HepG2 (cell line): ENCODE measurements at regions of chr18 and their contacts with region 1.

Region 1: GRCh38 chr18:74652392-74652988 is 54.8 kb downstream of the ZNF407 start:
- DNase-seq: peak; percentile 33
- ATAC-seq: peak; percentile 38; the same call in 2 of the 3 replicates
- H3K4me3 ChIP-seq: no peak overlapping the region
- H3K27ac ChIP-seq: no peak overlapping the region
- H3K4me1 ChIP-seq: 0 out of 2 replicates have a peak, but pooled peaks cover 3% of the 10 kb centered on the region
- H3K27me3 ChIP-seq: no peaks in the 10 kb centered on the region
- CTCF ChIP-seq: peak; percentile 64
- EP300 ChIP-seq: no peak
- POLR2A ChIP-seq: no peak
- RAD21 ChIP-seq: peak; percentile 31; the same call in 1 of the 2 replicates

Region 2: DNA sequence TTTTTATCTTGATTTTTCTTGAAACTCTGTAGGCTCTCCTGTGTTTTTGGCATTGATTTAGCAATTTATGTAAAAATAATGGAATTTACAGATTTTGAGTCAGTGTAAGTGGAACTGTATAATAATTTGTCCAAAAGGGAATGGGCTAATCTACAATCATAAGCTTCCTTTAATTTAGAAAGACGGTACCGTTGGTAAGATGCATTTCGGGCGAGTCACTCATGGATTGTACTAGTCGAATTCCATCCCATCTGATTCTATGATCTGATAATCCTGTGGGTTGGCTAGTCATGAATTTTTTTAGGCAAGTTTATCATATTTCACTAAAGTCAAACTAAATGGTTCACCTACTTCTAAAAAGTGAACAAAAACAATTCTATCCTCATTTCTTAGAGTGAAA is 78.6 kb after region 1 on chr18:
- CTCF ChIA-PET with region 1: no interaction called
- POLR2A ChIA-PET with region 1: no interaction called
- in situ Hi-C with region 1: no loop called
- intact Hi-C with region 1: loop called (anchors 5 kb)
- DNase-seq: no peak
- ATAC-seq: no peak
- H3K4me3 ChIP-seq: no peak overlapping the region
- H3K27ac ChIP-seq: no peak overlapping the region
- H3K4me1 ChIP-seq: peaks cover 47% of the 10 kb centered on the region
- H3K27me3 ChIP-seq: no peaks in the 10 kb centered on the region
- CTCF ChIP-seq: no peak
- EP300 ChIP-seq: no peak
- POLR2A ChIP-seq: no peak
- RAD21 ChIP-seq: no peak

Region 3: DNA sequence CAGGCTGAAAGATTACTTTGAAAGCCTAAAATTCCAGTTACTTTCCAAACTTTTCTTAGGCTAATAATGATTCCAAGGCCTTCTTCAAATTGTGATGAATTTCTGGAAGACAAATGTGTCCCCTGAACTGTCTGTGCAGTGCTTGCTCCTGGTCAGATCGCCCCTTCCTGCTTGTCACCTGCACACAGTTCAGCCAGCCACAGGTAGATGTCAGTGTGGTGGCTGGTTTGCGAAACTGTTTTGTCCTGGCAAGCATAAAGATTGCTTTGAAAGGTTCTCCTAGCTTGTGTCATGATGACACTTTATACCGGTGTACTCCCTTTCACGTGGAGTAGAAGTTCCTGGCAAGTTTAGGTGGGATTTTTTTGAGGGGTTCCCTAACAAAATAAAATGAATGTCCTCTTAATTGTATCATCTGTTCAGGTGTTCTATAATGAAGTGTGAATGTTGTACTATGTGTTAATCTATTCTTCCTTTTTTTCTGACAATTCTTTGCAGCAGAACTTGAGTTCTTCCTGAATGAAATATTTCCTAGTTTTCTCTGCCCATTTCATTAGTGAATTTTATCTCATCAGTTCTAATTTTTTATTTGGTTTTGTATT is 244.0 kb after region 1 on chr18:
- CTCF ChIA-PET with region 1: no interaction called
- POLR2A ChIA-PET with region 1: no interaction called
- in situ Hi-C with region 1: no loop called
- intact Hi-C with region 1: loop called (anchors 2 kb)
- DNase-seq: peak; percentile 62
- ATAC-seq: peak; percentile 100
- H3K4me3 ChIP-seq: no peak overlapping the region
- H3K27ac ChIP-seq: no peak overlapping the region
- H3K4me1 ChIP-seq: 0 out of 2 replicates have a peak, but pooled peaks cover 5% of the 10 kb centered on the region
- H3K27me3 ChIP-seq: no peaks in the 10 kb centered on the region
- CTCF ChIP-seq: peak; percentile 87
- EP300 ChIP-seq: no peak
- POLR2A ChIP-seq: no peak
- RAD21 ChIP-seq: peak; percentile 56

Region 4: GRCh38 chr18:75041586-75041985 is 389.1 kb after region 1 on chr18:
- CTCF ChIA-PET with region 1: no interaction called
- POLR2A ChIA-PET with region 1: no interaction called
- in situ Hi-C with region 1: no loop called
- intact Hi-C with region 1: loop called (anchors 1 kb)
- DNase-seq: no peak
- ATAC-seq: 0 out of 3 replicates have a peak, but pooled peaks have one; percentile 41
- H3K4me3 ChIP-seq: no peak overlapping the region
- H3K27ac ChIP-seq: no peak overlapping the region
- H3K4me1 ChIP-seq: no peaks in the 10 kb centered on the region
- H3K27me3 ChIP-seq: no peaks in the 10 kb centered on the region; a peak in 1 of 5 replicates
- CTCF ChIP-seq: peak; percentile 22; the same call in 1 of the 2 replicates
- EP300 ChIP-seq: no peak
- POLR2A ChIP-seq: no peak
- RAD21 ChIP-seq: no peak

Region 5: DNA sequence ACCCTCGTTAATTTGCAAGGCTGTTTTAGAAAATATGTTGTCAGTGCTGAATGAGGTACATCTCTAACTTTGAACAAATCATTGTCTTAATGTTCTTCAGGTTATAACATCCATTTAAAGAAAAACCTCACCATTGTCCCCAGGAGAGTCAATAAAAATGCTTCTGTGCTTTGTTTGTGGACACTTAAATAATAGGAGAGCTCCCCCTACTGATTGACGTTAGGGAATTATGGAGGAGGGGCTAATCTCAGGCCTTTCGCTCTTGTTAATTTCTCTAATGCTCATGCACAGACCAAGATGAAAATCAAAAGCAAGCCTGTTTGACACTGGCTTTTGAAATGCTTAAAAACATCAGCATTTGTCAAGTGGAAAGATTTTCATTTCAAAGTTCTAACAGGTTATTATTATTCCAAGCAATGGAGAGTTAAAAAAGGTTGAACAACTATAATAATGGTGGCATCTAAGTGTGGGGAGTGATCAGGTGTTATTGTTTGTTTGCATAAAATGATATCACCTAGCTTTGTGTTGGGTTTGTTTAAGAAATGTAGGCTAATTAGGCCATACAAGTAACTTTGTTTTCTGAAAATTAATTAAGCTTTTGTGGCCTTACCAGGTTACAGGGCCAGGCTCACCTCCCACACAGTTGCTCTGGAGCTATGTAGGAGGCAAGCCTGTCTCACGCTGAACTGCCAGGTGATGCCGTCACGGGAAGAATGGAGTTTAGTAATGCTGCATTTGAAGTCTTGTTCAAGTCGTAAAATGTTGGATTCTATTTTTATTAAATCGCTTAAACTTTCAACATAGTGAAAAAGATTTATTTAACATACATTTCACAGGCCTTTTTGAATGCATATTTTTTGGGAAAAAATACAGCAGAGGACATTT is 826.7 kb after region 1 on chr18:
- CTCF ChIA-PET with region 1: interaction called, 9 read pairs
- POLR2A ChIA-PET with region 1: no interaction called
- in situ Hi-C with region 1: loop called (anchors 25 kb)
- intact Hi-C with region 1: loop called (anchors 1 kb)
- DNase-seq: peak; percentile 34
- ATAC-seq: peak; percentile 83
- H3K4me3 ChIP-seq: no peak overlapping the region
- H3K27ac ChIP-seq: no peak overlapping the region
- H3K4me1 ChIP-seq: no peaks in the 10 kb centered on the region
- H3K27me3 ChIP-seq: no peaks in the 10 kb centered on the region; a peak in 1 of 5 replicates
- CTCF ChIP-seq: peak; percentile 68
- EP300 ChIP-seq: no peak
- POLR2A ChIP-seq: no peak
- RAD21 ChIP-seq: no peak